ENCODE measurements at regions of chr11 and their contacts with region 1.

Region 1: DNA sequence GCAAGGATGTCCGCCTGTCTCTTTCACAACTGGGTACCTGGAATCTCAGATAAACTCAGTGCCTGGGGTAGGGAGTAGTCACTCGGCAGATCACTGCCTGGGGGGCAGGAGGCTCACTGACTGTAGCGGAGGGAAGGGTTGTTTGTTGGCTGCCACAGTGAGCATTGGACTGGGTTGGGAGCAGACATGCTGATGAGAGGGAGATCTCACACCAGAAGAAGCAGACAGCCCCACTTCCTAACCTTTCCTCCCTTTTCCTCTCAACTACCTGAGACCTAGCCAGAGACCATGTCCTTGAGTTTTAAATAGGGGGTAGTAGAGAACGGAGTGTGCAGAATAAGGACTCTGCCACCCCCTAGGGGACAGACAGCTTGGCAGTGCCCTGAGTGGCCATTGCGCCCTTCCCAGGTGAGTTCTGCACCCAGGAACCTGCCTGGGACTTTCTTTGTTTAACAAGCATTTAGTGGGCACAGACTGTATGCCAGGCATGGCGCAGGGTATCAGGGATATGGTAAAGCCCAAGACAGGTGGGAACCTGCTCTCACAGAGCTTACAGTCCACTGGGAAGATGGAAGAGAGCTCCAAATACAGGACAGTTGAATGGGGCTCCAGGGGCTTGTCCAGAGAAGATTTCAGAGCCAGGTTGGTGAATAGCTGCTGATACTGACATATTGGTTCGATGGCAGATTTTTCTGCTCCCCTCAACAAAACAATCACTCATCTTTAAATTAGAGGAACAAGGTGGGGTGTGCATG is 115.7 kb upstream of the NNMT start:
- DNase-seq: peak; percentile 47
- H3K4me3 Mint-ChIP-seq: no peak overlapping the region
- H3K27ac Mint-ChIP-seq: no peak overlapping the region
- H3K4me1 Mint-ChIP-seq: no peaks in the 10 kb centered on the region
- H3K27me3 Mint-ChIP-seq: peaks cover 100% of the 10 kb centered on the region
- CTCF ChIP-seq: peak; percentile 35

Region 2: DNA sequence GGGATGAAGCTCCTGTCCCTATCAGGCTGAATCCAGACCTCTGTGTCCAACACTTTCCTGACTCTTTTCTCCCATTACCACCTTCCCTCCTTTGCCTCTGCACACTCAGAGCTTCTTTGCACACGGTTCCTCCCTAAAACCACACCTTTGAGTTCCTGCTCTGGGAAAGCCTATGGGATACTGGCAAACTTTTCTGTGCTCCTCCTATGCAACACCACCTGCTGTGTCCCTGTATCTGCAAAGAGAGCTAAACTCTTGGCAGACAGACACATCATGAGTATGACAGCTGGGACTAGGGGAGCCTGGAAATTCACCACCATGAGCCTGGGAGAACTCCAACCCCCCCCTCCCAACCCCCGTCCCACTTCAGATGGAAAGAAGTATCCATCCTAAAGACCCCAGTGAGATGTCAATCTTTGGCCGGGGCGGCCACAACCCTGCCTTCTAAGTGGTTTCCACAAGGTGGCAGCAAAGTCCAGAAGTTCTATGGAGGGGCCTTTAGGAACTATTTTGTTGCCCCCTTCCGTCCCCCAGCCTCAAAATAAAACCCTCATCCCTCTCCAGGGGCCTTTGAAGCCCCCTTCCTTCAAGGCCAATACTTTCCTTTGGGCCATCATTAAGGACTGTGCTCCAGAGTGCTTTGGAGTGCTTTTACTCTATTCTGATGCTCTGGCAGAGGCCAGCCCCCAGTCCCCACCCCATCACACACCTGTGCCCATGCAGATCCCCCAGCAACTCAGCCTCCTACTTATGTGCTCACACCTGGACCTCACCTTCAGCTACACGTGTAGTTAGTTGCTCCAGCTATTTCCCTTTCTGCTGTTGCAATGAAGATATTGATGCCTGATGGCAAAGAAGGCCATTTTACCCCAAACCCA is 186.2 kb before region 1 on chr11:
- CTCF ChIA-PET with region 1: no interaction called
- intact Hi-C with region 1: loop called (anchors 1 kb)
- DNase-seq: peak; percentile 11
- H3K4me3 Mint-ChIP-seq: no peak overlapping the region
- H3K27ac Mint-ChIP-seq: no peak overlapping the region
- H3K4me1 Mint-ChIP-seq: no peaks in the 10 kb centered on the region
- H3K27me3 Mint-ChIP-seq: peaks cover 86% of the 10 kb centered on the region
- CTCF ChIP-seq: peak; percentile 64

Region 3: DNA sequence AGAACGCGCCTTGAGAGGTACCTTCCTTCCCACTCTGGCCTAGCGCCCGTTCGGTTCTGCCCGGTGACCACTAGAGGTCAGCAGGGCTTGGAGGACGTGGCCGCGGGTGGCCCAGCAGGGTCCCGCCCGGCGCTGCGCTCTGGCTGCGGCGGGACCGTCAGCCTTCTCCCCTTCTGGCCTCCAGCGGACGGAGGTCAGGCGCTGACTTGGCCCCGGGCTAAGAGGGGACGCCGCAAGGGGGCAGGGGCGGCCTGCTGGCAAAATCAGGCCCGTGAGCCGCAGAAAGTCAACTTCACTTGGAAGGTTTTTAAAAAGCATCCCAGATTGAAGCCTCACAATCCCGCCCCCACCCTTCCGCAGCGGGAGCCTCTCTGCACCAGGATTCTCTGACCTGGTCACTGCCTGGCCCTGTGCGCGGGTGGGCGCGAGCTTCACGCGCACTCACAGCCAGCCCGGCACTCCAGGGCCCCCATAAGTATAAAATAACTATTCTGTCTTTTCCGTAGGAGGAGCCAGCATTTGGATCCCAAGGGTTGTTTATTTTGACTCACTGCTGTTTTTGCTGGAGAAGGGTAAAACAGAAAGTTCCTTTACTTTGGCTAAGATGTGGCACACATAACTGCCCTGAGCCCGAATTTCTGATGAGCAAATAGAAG is 144.2 kb before region 1 on chr11:
- CTCF ChIA-PET with region 1: no interaction called
- intact Hi-C with region 1: loop called (anchors 5 kb)
- DNase-seq: peak; percentile 69
- H3K4me3 Mint-ChIP-seq: peak overlapping the region; percentile 55
- H3K27ac Mint-ChIP-seq: no peak overlapping the region
- H3K4me1 Mint-ChIP-seq: no peaks in the 10 kb centered on the region
- H3K27me3 Mint-ChIP-seq: peaks cover 60% of the 10 kb centered on the region
- CTCF ChIP-seq: peak; percentile 26